Posterior vena cava (tissue), 2 donors: ENCODE measurements at regions of chr1 and their contacts with region 1.

Region 1: DNA sequence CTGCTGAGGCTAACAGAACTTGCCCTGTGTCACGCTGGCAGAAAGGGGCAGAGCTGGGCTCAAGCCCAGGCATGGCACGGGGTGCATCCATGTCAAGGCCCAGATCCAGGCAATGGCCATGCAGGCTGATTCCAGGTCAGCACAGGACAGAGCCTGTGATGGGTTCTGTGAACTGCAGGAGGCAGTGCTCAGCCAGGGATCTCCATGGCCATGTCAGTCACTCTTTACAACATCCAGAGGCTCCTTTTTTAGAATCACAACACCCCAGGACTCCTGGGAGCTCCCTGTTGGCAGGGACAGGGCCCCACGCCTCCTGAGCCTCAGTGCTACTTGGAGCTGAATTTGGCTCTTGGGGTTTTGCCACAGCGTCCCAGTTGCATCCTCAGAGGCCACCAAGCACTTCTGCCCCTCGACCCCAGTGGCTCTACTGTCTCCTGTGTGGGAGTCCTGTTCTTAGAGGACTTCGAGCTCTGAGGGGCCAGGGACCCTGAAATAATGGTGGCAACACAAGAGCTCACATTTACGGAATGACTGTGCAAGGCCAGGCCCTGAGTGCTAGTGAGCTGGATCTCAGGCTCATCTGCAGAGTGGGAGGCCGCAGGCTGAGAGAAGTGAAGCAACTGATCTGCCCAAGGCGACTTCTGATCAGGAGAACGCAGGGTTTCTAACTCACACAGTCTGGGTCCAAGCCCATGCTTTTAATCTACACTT is 211.5 kb downstream of the TRABD2B start:
- DNase-seq: no peak

Region 2: DNA sequence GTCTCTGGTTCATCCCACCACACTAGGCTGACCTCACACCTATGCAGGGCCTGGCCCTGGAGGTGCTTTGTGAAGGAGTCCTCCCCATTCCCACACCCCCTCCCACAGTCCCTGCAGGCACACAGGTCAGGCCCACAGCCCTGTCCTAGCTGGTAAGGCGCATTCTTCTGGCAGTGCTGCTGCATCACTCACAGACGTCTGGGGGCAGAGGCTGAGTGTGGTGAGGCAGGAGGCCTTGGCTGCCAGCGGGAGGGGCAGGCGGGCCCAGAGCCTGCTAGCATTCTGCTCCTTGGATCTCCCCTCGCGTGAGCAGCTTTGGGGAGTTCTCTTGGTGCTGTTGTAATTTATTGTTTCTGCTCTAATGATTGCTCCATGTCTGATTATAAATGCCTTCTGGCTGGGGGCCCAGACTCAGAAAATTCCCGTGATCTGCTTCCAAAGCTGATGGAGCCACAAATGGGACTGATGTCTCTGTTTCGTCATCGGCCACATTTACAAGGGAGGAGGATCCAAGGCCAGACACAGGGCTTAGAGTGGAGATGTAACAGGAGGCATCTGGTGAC is 148.6 kb after region 1 on chr1:
- intact Hi-C with region 1: loop called in 1 of 2 experiments (anchors 10 kb)
- DNase-seq: peak; percentile 94

Region 3: DNA sequence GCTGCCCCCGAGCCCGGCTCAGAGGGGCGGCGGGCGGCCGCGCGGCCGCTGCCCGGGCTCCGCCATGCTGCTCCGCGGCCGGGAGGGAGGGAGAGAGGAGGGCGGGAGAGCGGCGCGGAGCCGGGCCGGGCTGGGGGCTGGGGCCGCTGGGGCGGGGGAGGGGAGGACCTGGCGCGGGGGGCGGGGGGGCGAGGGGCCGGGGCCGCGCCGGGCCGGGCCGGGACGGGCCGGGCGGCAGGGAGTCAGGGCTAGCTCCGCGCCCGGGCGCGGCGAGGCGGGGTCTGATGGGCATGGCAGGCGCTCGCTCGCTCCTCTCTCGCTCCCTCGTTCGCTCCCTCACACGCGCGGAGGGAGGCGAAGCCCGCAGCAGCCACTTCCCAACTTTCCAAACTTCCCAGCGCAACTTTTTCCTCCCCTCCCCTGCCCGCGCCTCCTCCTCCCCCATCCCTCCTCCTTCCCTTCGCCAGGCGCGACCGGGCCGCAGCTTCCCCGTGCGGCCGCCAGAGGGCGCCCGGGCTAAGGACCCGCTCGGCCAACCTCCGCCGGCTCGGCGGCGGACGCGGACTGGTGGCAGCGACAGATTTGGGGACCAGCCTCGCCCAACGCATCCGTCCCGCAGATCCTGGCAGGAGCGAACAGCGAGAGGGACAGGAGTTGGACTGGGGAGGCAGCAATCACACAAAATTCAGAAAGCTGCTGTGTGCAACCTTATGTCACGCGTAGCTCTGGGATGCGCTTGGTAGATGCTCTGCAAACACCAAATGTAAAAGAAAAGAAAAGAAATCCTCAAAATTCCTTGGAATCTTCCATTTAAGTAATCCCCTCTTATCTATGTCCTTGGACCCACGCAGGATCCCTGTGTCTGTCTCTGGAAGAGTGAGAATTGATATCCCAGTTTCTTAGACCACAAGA is 211.8 kb after region 1 on chr1 and contains the start of gene TRABD2B:
- intact Hi-C with region 1: loop called in 1 of 2 experiments (anchors 10 kb)
- DNase-seq: peak; percentile 95
- total RNA-seq, gene TRABD2B: 10.5 to 16.4 TPM